HEK293 (cell line): ENCODE measurements at regions of chr4 and their contacts with region 1.

Region 1: DNA sequence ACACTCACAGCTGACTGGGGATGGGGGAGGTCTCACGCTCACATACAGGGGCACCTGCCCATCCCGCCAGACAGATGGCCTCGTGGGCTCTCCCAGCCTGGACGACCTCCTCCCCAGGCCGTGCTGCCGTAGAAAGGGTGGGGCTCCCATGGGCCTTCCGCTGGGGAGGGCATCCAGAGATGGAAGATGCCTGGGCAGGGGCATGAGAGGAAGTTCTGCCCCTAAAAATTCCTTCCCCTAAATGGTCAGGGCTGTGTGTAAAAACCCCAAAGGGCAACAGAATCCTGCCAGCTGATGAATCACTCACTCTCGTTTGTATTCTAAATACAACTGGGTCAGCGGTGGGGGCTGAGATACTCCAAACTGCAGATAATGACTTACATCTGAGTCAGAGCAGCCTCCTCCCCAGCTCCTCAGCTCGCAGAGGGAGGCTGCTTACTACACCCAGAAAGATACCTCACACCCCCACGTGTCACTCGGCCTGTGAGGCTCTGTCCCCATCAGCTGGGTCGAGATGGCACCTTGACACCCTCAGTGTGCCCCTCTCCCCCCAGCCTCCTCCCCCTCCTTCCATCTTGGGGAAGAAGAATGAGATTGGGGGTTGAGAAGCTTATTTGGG is 10.1 kb downstream of the WDR1 start:
- H3K4me3 ChIP-seq: no peak overlapping the region
- H3K27ac ChIP-seq: no peak overlapping the region
- H3K4me1 ChIP-seq: no peaks in the 10 kb centered on the region
- CTCF ChIP-seq: no peak

Region 2: GRCh38 chr4:10079912-10080588 is 26.5 kb before region 1 on chr4:
- CTCF ChIA-PET with region 1: no interaction called
- POLR2A ChIA-PET with region 1: no interaction called
- H3K4me3 ChIP-seq: no peak overlapping the region
- H3K27ac ChIP-seq: no peak overlapping the region
- H3K4me1 ChIP-seq: no peaks in the 10 kb centered on the region
- CTCF ChIP-seq: no peak

Region 3: GRCh38 chr4:10096201-10096977 is 10.1 kb before region 1 on chr4:
- CTCF ChIA-PET with region 1: no interaction called
- POLR2A ChIA-PET with region 1: no interaction called
- H3K4me3 ChIP-seq: no peak overlapping the region
- H3K27ac ChIP-seq: no peak overlapping the region
- H3K4me1 ChIP-seq: no peaks in the 10 kb centered on the region
- CTCF ChIP-seq: no peak

Region 4: DNA sequence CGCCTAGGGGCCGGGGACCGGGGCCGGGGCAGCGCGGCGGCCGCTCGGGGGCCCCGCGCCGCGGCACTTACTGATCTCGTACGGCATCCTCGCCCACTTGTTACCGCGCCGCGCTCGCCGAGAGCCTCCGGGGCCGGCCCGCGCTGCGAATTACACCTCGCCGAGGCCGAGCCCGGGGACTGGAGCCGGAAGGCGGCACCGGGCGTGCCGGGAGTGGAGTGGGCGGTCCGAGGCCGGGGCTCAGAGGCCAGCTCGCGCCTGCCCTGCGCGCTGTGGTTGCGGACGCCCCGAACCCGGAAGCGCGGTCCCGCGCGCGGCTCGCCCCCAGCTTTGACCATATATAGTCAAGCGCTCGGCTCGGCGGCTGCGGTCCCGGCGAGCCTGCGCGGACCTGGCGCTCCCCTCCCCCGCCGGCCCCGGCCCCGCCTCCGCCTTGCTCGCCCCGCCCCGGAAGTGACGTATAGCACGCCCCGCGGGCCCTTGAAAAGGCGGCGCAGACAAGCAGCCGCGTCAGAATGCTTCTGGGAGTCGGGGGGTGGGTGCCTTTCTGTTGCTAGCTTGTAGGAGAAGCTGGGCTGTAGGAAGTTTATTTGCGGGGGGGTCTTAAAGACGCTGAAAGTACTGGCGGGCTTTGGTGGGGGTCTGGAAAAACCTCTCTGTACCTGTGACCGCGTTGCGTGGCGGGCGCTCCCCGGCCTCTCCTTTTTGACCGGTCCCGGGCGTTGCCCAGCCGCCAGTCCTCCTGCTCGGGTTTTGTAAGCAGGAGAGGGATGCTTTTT is 10.2 kb after region 1 on chr4 and contains the start of gene WDR1:
- CTCF ChIA-PET with region 1: no interaction called
- POLR2A ChIA-PET with region 1: interaction called, 19 read pairs
- H3K4me3 ChIP-seq: peak within 1 kb of the TSS; percentile 75
- H3K27ac ChIP-seq: peak within 1 kb of the TSS; percentile 81
- H3K4me1 ChIP-seq: no peaks in the 10 kb centered on the region
- CTCF ChIP-seq: no peak

Region 5: GRCh38 chr4:10226756-10227155 is 120.2 kb after region 1 on chr4:
- CTCF ChIA-PET with region 1: no interaction called
- POLR2A ChIA-PET with region 1: no interaction called
- H3K4me3 ChIP-seq: no peak overlapping the region
- H3K27ac ChIP-seq: no peak overlapping the region
- H3K4me1 ChIP-seq: no peaks in the 10 kb centered on the region
- CTCF ChIP-seq: no peak